HCT116 (cell line): ENCODE measurements at regions of chr7 and their contacts with region 1.

Region 1: GRCh38 chr7:85106719-85107118 is 80.1 kb downstream of the SEMA3D start:
- DNase-seq: no peak
- ATAC-seq: no peak
- H3K4me3 ChIP-seq: no peak overlapping the region
- H3K27ac ChIP-seq: no peak overlapping the region
- H3K4me1 ChIP-seq: peaks cover 5 to 26% of the 10 kb centered on the region in 2 experiments; a peak in 3 of 4 replicates
- H3K27me3 ChIP-seq: no peaks in the 10 kb centered on the region
- CTCF ChIP-seq: no peak
- POLR2A ChIP-seq: no peak
- RAD21 ChIP-seq: no peak

Region 2: GRCh38 chr7:84865560-84865959 is 241.2 kb before region 1 on chr7:
- CTCF ChIA-PET with region 1: no interaction called
- POLR2A ChIA-PET with region 1: no interaction called
- RAD21 ChIA-PET with region 1: no interaction called
- intact Hi-C with region 1: no loop called
- DNase-seq: no peak
- ATAC-seq: no peak
- H3K4me3 ChIP-seq: no peak overlapping the region
- H3K27ac ChIP-seq: no peak overlapping the region
- H3K4me1 ChIP-seq: no peaks in the 10 kb centered on the region
- H3K27me3 ChIP-seq: no peaks in the 10 kb centered on the region
- CTCF ChIP-seq: no peak
- POLR2A ChIP-seq: no peak
- RAD21 ChIP-seq: no peak

Region 3: GRCh38 chr7:84997626-84998025 is 109.1 kb before region 1 on chr7:
- CTCF ChIA-PET with region 1: no interaction called
- POLR2A ChIA-PET with region 1: no interaction called
- RAD21 ChIA-PET with region 1: no interaction called
- intact Hi-C with region 1: no loop called
- DNase-seq: no peak
- ATAC-seq: no peak
- H3K4me3 ChIP-seq: no peak overlapping the region
- H3K27ac ChIP-seq: no peak overlapping the region
- H3K4me1 ChIP-seq: no peaks in the 10 kb centered on the region
- H3K27me3 ChIP-seq: no peaks in the 10 kb centered on the region
- CTCF ChIP-seq: no peak
- POLR2A ChIP-seq: no peak
- RAD21 ChIP-seq: no peak

Region 4: DNA sequence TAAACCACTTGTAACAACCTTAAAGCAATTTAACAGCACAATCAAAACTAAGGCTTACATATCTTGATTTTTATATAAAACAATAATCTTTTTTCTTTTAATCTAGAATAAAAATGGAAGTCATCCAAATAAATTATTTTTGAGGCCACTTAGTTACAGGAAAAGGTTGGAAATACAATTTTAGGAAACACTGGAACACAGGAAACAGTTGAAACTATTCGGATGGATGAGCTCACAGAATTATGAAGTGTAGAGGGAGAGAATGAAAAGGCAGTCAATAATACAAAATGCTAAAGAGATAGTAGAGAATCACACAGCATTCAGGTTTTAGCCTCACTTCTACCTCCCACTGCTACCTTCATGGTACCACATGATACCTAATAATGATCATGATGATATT is 44.1 kb before region 1 on chr7:
- CTCF ChIA-PET with region 1: no interaction called
- POLR2A ChIA-PET with region 1: no interaction called
- RAD21 ChIA-PET with region 1: no interaction called
- intact Hi-C with region 1: loop called (anchors 1 kb)
- DNase-seq: no peak
- ATAC-seq: no peak
- H3K4me3 ChIP-seq: no peak overlapping the region
- H3K27ac ChIP-seq: no peak overlapping the region
- H3K4me1 ChIP-seq: no peaks in the 10 kb centered on the region
- H3K27me3 ChIP-seq: no peaks in the 10 kb centered on the region
- CTCF ChIP-seq: no peak
- POLR2A ChIP-seq: no peak
- RAD21 ChIP-seq: no peak